ENCODE measurements at regions of chr12 and their contacts with region 1.

Region 1: DNA sequence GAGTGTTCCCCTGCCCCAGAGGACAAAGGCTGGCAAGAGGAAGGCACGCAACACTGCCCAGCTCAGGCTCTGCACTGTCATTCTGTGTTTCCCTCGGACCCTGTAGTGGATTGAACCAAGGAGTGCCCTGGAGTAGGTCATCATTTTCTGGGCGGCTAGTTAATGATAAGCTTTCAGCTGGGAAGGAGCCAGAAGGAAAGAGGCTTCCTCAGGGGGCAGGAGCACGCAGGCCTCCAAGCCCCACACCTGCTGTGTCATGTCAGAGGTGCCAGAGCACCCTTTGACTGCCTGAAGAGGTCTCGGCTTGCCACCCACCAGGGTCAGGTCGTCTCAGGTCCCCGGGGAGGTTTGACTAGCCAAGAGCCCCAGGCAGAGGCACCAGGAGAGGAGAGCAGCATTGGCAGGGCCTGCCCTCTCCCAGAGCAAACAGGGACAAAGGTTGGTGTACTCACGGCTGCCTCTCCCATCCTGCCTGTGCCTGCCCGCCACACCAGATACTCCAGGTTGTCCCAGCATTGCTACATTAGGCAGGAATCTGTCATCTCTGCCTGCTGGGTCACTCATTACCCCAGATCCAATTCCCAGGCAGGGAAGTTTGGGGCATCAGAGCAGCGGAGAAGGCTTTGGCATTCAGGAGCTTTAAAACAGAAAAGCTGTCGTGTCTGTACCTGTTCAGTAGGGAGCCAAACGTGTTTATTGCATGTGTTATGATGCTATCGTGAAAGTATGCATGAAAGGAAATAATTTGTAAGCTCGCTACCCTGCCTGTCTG is 33.5 kb upstream of the ATP2A2 start:
- DNase-seq: peak; percentile 90 to 95
- H3K4me3 ChIP-seq: 0 out of 2 replicates have a peak overlapping the region, but pooled peaks have one; percentile 8
- H3K4me3 Mint-ChIP-seq: peak overlapping the region; percentile 62
- H3K27ac Mint-ChIP-seq: peak overlapping the region; percentile 86
- H3K4me1 ChIP-seq: peaks cover 53% of the 10 kb centered on the region
- H3K4me1 Mint-ChIP-seq: peaks cover 47% of the 10 kb centered on the region
- H3K27me3 ChIP-seq: no peaks in the 10 kb centered on the region
- H3K27me3 Mint-ChIP-seq: no peaks in the 10 kb centered on the region
- CTCF ChIP-seq: no peak

Region 2: GRCh38 chr12:110234755-110235154 is 12.8 kb before region 1 on chr12:
- CTCF ChIA-PET with region 1: interaction called, 4 read pairs
- POLR2A ChIA-PET with region 1: no interaction called
- intact Hi-C with region 1: loop called (anchors 1 kb)
- DNase-seq: no peak
- H3K4me3 ChIP-seq: no peak overlapping the region
- H3K4me3 Mint-ChIP-seq: no peak overlapping the region
- H3K27ac Mint-ChIP-seq: peak overlapping the region; percentile 46
- H3K4me1 ChIP-seq: peaks cover 22% of the 10 kb centered on the region
- H3K4me1 Mint-ChIP-seq: peaks cover 21% of the 10 kb centered on the region
- H3K27me3 ChIP-seq: no peaks in the 10 kb centered on the region
- H3K27me3 Mint-ChIP-seq: no peaks in the 10 kb centered on the region
- CTCF ChIP-seq: no peak

Region 3: GRCh38 chr12:111741235-111741812 is 1493.8 kb after region 1 on chr12:
- CTCF ChIA-PET with region 1: no interaction called
- POLR2A ChIA-PET with region 1: no interaction called
- intact Hi-C with region 1: no loop called
- DNase-seq: no peak
- H3K4me3 ChIP-seq: no peak overlapping the region
- H3K4me3 Mint-ChIP-seq: no peak overlapping the region
- H3K27ac Mint-ChIP-seq: peak overlapping the region; percentile 31
- H3K4me1 ChIP-seq: 0 out of 2 replicates have a peak, but pooled peaks cover 3% of the 10 kb centered on the region
- H3K4me1 Mint-ChIP-seq: peaks cover 10% of the 10 kb centered on the region
- H3K27me3 ChIP-seq: no peaks in the 10 kb centered on the region
- H3K27me3 Mint-ChIP-seq: no peaks in the 10 kb centered on the region
- CTCF ChIP-seq: no peak